ENCODE measurements at regions of chr10 and their contacts with region 1.

Region 1: DNA sequence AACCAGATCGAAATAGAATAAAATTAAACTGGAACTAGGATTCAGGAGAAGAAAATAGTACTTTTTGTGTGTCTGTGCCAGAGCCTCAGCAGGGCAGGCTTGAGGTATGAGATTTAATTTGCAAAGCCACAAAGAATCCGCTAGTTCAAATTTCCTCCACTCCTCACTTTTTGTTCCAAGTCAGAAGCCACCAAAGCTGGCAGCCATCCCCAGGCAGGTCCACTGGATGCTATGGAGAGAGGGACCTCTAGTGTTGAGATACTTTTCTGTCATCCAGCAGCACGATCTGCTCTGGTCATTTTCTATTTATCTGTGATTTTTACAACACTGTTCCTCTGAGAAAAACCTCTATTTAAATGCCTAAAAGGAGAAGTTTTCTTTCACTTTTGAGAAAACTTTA is 147.9 kb upstream of the FRMD4A start:
- DNase-seq: peak; percentile 66 to 93 (median 83)

Region 2: GRCh38 chr10:13787015-13787421 is 691.6 kb before region 1 on chr10:
- intact Hi-C with region 1: loop called (anchors 10 kb)
- DNase-seq: peak in 41 of 42 donors; percentile 27 to 85 (median 62)

Region 3: DNA sequence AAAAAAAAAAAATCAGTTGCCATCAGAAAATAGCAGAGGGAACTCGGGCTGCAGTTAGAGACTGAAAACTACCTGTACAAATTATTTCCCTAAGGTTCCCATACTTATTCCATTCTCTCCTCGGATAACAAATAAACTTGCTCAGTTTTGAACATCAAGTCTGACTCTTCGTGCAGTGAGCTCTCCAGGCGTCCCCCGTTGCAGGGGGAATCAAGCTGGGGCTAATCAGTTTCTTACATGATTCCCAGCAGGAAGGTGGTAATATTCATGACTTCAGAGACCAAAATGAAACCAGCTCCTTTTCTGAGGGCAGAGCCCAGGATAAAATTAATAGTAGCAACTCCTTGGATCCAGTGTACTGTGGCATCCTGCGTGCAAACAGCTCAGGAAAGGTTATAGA is 283.2 kb before region 1 on chr10:
- intact Hi-C with region 1: loop called (anchors 5 kb)
- DNase-seq: peak in 1 of 42 donors; percentile 12

Region 4: DNA sequence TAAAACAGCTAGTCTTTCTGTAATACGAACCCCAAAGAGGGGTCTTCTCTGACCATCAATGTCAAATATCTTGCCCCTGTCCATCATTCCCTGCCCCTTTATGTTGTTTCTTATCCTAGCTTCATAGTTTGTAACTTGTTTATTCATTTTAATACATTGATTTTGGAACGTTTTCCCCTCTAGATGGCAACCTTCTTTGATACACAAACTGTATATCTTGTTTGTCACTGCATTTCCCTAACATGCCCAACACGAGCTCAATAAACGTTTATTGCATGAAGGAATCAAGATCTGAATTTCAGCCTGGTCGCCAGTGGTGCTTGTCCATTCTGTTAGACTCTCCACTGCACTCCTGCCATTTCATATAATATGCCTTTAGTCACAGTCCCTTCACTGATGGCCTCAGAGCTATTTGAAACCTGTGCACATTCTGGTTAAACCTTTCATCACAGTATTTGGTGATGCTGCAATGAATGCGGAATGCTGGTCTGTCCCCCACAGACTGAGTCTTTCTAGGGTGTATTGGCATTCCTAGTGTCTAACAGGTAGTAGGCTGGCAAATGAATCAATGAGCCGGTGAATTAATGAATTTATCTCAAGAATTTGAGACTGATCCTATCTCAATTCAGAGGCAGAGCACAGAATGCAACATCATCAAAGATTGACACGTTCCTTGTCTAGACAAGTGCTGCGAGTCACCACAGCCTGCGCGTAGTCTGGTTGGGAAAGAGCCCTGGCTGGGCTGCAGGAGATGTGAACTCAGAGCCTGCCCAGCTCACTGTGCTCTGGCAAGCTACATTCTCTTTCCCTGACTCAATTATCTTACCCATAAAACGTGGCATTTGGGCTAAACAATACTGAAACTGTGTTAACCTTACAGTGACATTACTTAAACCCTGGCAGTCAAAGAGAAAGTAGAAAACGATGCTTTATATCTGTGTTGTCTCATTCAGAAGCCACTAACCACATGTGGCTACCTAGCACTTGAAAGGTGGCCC is 92.7 kb before region 1 on chr10:
- intact Hi-C with region 1: loop called (anchors 5 kb)
- DNase-seq: no peak

Region 5: GRCh38 chr10:14635043-14635710 is 156.6 kb after region 1 on chr10:
- intact Hi-C with region 1: no loop called
- DNase-seq: no peak

Measured in head of caudate nucleus (tissue), 42 donors.